ENCODE measurements at regions of chr16 and their contacts with region 1.

Region 1: DNA sequence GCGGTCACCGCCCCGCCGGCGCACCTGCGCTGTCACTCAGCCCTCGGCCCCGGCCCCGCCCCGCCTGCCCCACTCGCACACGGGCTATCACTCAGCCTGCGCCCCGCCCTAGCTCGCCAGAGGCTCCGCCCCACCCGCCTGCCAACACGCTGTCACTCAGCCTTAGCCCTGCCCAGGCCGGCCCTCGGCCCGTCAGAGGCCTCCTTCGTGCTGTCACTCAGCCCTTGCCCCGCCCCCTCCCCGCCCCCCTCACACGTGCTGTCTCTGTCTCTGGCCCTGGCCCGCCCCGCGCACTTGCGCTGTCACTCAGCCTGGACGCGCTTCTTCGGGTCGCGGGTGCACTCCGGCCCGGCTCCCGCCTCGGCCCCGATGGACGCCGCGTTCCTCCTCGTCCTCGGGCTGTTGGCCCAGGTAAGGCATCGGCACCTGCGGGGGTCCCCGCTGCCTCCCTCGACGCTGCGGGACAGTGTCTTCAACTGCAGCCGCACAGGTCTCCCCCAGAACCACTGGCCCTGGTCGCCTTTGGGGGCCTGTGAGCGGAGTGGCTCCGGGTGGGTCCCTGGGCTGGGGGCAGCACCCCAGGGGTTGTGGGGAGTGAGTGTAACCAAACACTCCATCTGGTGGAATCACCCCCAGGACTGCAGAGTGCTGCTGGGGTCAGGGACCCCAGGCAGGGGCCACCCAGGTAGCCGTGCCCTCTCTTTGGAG is at the start of gene CDH15:
- DNase-seq: peak; percentile 79 to 96 (median 91)
- ATAC-seq: peak; percentile 97
- H3K4me3 ChIP-seq: peak within 1 kb of the TSS; percentile 51
- H3K4me3 Mint-ChIP-seq: peak within 1 kb of the TSS; percentile 65 to 88 (median 76)
- H3K27ac ChIP-seq: no peak within 1 kb of the TSS
- H3K27ac Mint-ChIP-seq: peak within 1 kb of the TSS in 5 of 9 donors; percentile 51 to 86 (median 75)
- H3K4me1 ChIP-seq: peaks cover 8 to 21% of the 10 kb centered on the region in 2 donors
- H3K4me1 Mint-ChIP-seq: peaks cover 6 to 10% (median 7%) of the 10 kb centered on the region in 7 donors
- H3K27me3 ChIP-seq: no peaks in the 10 kb centered on the region
- H3K27me3 Mint-ChIP-seq: peaks cover 0 to 6% (median 0%) of the 10 kb centered on the region in 5 donors
- total RNA-seq, gene CDH15: not detected

Region 2: GRCh38 chr16:88743693-88744576 is 427.7 kb before region 1 on chr16:
- CTCF ChIA-PET with region 1: no interaction called
- POLR2A ChIA-PET with region 1: no interaction called
- intact Hi-C with region 1: loop called in 1 of 2 experiments (anchors 1 kb)
- DNase-seq: peak; percentile 55 to 81 (median 69)
- ATAC-seq: peak; percentile 71
- H3K4me3 ChIP-seq: no peak overlapping the region
- H3K4me3 Mint-ChIP-seq: peak overlapping the region in 3 of 10 donors; percentile 16 to 69 (median 44)
- H3K27ac ChIP-seq: no peak overlapping the region
- H3K27ac Mint-ChIP-seq: peak overlapping the region in 1 of 9 donors; percentile 29
- H3K4me1 ChIP-seq: peaks cover 22 to 31% of the 10 kb centered on the region in 2 donors
- H3K4me1 Mint-ChIP-seq: peaks cover 9 to 27% (median 17%) of the 10 kb centered on the region in 7 donors
- H3K27me3 ChIP-seq: no peaks in the 10 kb centered on the region
- H3K27me3 Mint-ChIP-seq: no peaks in the 10 kb centered on the region

Region 3: GRCh38 chr16:88941913-88942909 is 229.4 kb before region 1 on chr16:
- CTCF ChIA-PET with region 1: interaction called, 3 read pairs
- POLR2A ChIA-PET with region 1: interaction called, 4 read pairs
- intact Hi-C with region 1: loop called in 1 of 2 experiments (anchors 1 kb)
- DNase-seq: peak; percentile 21 to 67 (median 51)
- ATAC-seq: peak; percentile 76
- H3K4me3 ChIP-seq: no peak overlapping the region
- H3K4me3 Mint-ChIP-seq: peak overlapping the region; percentile 27 to 84 (median 52)
- H3K27ac ChIP-seq: no peak overlapping the region
- H3K27ac Mint-ChIP-seq: peak overlapping the region in 2 of 9 donors; percentile 1 to 41
- H3K4me1 ChIP-seq: peaks cover 3 to 6% of the 10 kb centered on the region in 2 donors
- H3K4me1 Mint-ChIP-seq: peaks cover 0 to 19% (median 5%) of the 10 kb centered on the region in 7 donors
- H3K27me3 ChIP-seq: peaks cover 0 to 15% of the 10 kb centered on the region in 2 donors
- H3K27me3 Mint-ChIP-seq: peaks cover 17 to 44% (median 25%) of the 10 kb centered on the region in 5 donors

Region 4: DNA sequence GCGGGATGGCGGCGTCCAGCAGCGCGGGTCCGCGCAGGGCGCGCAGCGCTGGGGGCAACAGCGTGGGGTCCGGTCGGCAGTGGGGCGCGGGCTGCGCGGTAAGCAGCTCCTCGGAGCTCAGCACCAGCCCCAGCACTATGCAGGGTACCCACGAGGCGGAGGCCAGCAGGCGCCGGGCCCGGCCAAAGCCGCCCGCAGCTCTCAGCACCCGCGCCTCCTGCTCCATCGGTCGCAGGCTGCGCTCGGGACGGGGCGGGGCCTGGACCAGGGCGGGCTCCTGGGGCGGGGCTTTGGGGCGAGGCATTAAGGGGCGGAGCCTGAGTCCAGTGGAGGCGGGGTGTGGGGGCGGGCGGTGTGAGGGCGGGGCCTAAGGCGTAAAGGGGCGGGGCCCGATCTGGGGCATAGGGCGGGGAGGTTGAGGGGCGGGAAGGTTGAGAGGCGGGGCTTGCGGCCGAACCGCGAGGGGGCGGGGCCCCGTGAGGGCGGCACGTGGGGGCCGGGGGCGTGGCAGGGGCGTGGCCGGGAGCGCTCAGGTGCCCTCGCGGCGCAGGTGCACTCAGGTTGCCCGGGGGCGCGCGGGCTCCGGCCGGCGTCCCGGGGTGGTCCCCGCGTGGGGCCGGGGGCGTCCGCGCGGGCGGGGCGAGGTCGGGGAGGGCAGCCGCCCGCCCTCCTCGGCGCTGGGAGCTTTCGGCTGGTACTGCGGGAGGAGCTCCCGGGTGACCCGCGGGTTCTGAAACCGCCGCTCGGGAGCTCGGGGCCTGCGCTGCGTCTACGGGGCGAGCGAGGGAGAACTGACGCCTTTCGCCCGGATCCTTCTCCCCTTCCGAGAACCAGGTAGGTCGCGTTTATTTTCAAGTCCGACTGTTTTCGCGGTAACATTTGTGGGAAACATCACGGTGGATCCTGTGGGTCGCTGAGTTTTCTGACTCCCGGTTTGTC is 30.1 kb after region 1 on chr16:
- CTCF ChIA-PET with region 1: no interaction called
- POLR2A ChIA-PET with region 1: no interaction called
- intact Hi-C with region 1: loop called (anchors 1 to 2 kb)
- DNase-seq: peak; percentile 62 to 89 (median 76)
- ATAC-seq: peak; percentile 94
- H3K4me3 ChIP-seq: no peak overlapping the region
- H3K4me3 Mint-ChIP-seq: peak overlapping the region; percentile 12 to 82 (median 74)
- H3K27ac ChIP-seq: no peak overlapping the region
- H3K27ac Mint-ChIP-seq: no peak overlapping the region
- H3K4me1 ChIP-seq: peaks cover 0 to 9% of the 10 kb centered on the region in 2 donors
- H3K4me1 Mint-ChIP-seq: peaks cover 0 to 22% (median 9%) of the 10 kb centered on the region in 7 donors
- H3K27me3 ChIP-seq: peaks cover 0 to 4% of the 10 kb centered on the region in 2 donors
- H3K27me3 Mint-ChIP-seq: peaks cover 22 to 47% (median 41%) of the 10 kb centered on the region in 5 donors

Region 5: GRCh38 chr16:89686520-89687091 is 515.0 kb after region 1 on chr16 and contains the start of gene CDK10:
- CTCF ChIA-PET with region 1: no interaction called
- POLR2A ChIA-PET with region 1: no interaction called
- intact Hi-C with region 1: loop called in 1 of 2 experiments (anchors 2 kb)
- DNase-seq: peak; percentile 80 to 97 (median 89)
- ATAC-seq: peak; percentile 90
- H3K4me3 ChIP-seq: peak within 1 kb of the TSS; percentile 96
- H3K4me3 Mint-ChIP-seq: peak within 1 kb of the TSS; percentile 86 to 96 (median 92)
- H3K27ac ChIP-seq: peak within 1 kb of the TSS; percentile 93
- H3K27ac Mint-ChIP-seq: peak within 1 kb of the TSS; percentile 80 to 95 (median 92)
- H3K4me1 ChIP-seq: peaks cover 0 to 7% of the 10 kb centered on the region in 2 donors
- H3K4me1 Mint-ChIP-seq: peaks cover 9 to 18% (median 17%) of the 10 kb centered on the region in 7 donors
- H3K27me3 ChIP-seq: no peaks in the 10 kb centered on the region
- H3K27me3 Mint-ChIP-seq: no peaks in the 10 kb centered on the region
- total RNA-seq, gene CDK10: 91.5 to 150 (median 102) TPM

Region 6: GRCh38 chr16:90022209-90023064 is 850.8 kb after region 1 on chr16:
- CTCF ChIA-PET with region 1: no interaction called
- POLR2A ChIA-PET with region 1: no interaction called
- intact Hi-C with region 1: no loop called
- DNase-seq: peak; percentile 51 to 89 (median 71)
- ATAC-seq: peak; percentile 80
- H3K4me3 ChIP-seq: peak overlapping the region; percentile 73
- H3K4me3 Mint-ChIP-seq: peak overlapping the region; percentile 75 to 82 (median 80)
- H3K27ac ChIP-seq: peak overlapping the region; percentile 69
- H3K27ac Mint-ChIP-seq: peak overlapping the region; percentile 67 to 84 (median 79)
- H3K4me1 ChIP-seq: peaks cover 11 to 31% of the 10 kb centered on the region in 2 donors
- H3K4me1 Mint-ChIP-seq: peaks cover 15 to 37% (median 28%) of the 10 kb centered on the region in 7 donors
- H3K27me3 ChIP-seq: no peaks in the 10 kb centered on the region
- H3K27me3 Mint-ChIP-seq: peaks cover 0 to 21% (median 0%) of the 10 kb centered on the region in 5 donors